ENCODE measurements at regions of chr20 and their contacts with region 1.

Region 1: DNA sequence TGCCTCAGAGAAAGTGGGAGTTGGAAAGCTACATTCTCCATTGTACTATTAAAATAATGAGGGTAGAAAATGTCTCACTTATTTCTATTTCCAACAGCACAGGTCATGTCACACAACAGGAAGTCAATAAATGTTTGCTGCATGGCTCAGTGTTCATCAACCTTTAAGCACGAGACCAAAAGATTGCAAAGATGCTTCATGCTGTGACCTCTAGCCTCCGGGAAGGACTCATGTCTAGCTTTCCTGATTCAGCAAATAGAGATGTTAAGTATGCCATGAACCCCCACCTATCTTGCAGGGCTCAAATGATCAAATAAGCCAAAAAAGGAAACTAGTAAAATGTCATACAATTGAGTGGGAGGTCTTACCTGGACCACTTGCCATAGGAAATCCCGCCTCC is 57.4 kb downstream of the NCOA6 start:
- DNase-seq: no peak
- H3K4me3 ChIP-seq: no peak overlapping the region
- H3K4me3 Mint-ChIP-seq: no peak overlapping the region
- H3K27ac Mint-ChIP-seq: no peak overlapping the region
- H3K4me1 ChIP-seq: 0 out of 2 replicates have a peak, but pooled peaks cover 4% of the 10 kb centered on the region
- H3K4me1 Mint-ChIP-seq: peaks cover 7% of the 10 kb centered on the region
- H3K27me3 ChIP-seq: no peaks in the 10 kb centered on the region
- H3K27me3 Mint-ChIP-seq: no peaks in the 10 kb centered on the region
- CTCF ChIP-seq: no peak

Region 2: DNA sequence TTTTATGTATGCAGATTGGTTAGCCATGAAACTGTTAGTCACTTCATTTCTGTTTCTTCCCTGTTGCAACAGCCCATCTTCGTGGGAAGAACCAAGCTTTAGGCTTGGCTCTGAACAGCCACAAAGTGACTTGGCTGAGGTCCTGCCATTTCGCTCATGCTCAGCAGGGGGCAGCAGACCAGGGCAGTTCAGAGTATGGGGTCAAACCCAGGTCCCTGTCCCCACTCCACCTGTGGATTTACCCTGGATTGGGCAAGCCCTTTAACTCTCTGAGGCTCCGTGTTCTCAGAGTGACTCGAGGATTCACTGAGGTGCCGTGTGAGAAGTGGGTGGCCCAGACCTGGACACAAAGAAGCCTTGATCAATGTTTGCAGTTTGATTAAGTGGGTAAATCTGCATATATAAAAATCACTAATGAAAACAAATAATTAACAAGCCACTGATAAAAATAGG is 229.4 kb before region 1 on chr20:
- CTCF ChIA-PET with region 1: interaction called, 17 read pairs
- POLR2A ChIA-PET with region 1: no interaction called
- intact Hi-C with region 1: loop called (anchors 1 kb)
- DNase-seq: peak; percentile 83 to 90
- H3K4me3 ChIP-seq: no peak overlapping the region
- H3K4me3 Mint-ChIP-seq: no peak overlapping the region
- H3K27ac Mint-ChIP-seq: peak overlapping the region; percentile 16
- H3K4me1 ChIP-seq: no peaks in the 10 kb centered on the region
- H3K4me1 Mint-ChIP-seq: no peaks in the 10 kb centered on the region
- H3K27me3 ChIP-seq: no peaks in the 10 kb centered on the region
- H3K27me3 Mint-ChIP-seq: no peaks in the 10 kb centered on the region
- CTCF ChIP-seq: peak; percentile 98 to 99

Region 3: GRCh38 chr20:34579191-34579978 is 188.7 kb before region 1 on chr20:
- CTCF ChIA-PET with region 1: interaction called, 10 read pairs
- POLR2A ChIA-PET with region 1: no interaction called
- intact Hi-C with region 1: loop called (anchors 1 kb)
- DNase-seq: peak in 1 of 2 experiments; percentile 59
- H3K4me3 ChIP-seq: no peak overlapping the region
- H3K4me3 Mint-ChIP-seq: no peak overlapping the region
- H3K27ac Mint-ChIP-seq: no peak overlapping the region
- H3K4me1 ChIP-seq: peaks cover 20% of the 10 kb centered on the region
- H3K4me1 Mint-ChIP-seq: peaks cover 9% of the 10 kb centered on the region
- H3K27me3 ChIP-seq: no peaks in the 10 kb centered on the region
- H3K27me3 Mint-ChIP-seq: no peaks in the 10 kb centered on the region
- CTCF ChIP-seq: peak in 1 of 2 experiments; percentile 82

Region 4: GRCh38 chr20:34791289-34792020 is 23.4 kb after region 1 on chr20:
- CTCF ChIA-PET with region 1: interaction called, 11 read pairs
- POLR2A ChIA-PET with region 1: no interaction called
- intact Hi-C with region 1: no loop called
- DNase-seq: no peak
- H3K4me3 ChIP-seq: no peak overlapping the region
- H3K4me3 Mint-ChIP-seq: no peak overlapping the region
- H3K27ac Mint-ChIP-seq: no peak overlapping the region
- H3K4me1 ChIP-seq: no peaks in the 10 kb centered on the region
- H3K4me1 Mint-ChIP-seq: peaks cover under 1% of the 10 kb centered on the region
- H3K27me3 ChIP-seq: no peaks in the 10 kb centered on the region
- H3K27me3 Mint-ChIP-seq: no peaks in the 10 kb centered on the region
- CTCF ChIP-seq: no peak

Region 5: DNA sequence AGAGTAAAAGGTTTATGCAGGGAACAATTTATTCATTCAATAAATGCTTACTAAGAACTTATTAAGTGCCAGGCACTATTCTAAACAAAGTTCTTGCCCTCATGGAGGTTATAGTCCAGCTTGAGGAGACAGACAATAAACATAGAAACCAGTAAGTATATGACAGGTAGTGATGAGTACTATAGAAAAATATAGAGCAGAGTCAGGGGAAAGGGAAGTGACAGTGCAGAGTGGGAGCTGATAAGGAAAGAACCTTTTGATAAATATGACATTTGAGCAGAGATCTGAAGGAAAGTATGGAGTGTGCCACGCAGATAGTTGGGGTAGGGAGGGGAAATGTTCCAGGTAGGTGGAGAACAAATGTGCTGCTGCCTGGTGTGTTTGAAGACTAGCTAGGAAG is 120.4 kb after region 1 on chr20:
- CTCF ChIA-PET with region 1: no interaction called
- POLR2A ChIA-PET with region 1: no interaction called
- intact Hi-C with region 1: no loop called
- DNase-seq: no peak
- H3K4me3 ChIP-seq: no peak overlapping the region
- H3K4me3 Mint-ChIP-seq: no peak overlapping the region
- H3K27ac Mint-ChIP-seq: no peak overlapping the region
- H3K4me1 ChIP-seq: peaks cover 15% of the 10 kb centered on the region; the same call in 1 of the 2 replicates
- H3K4me1 Mint-ChIP-seq: peaks cover 18% of the 10 kb centered on the region
- H3K27me3 ChIP-seq: no peaks in the 10 kb centered on the region
- H3K27me3 Mint-ChIP-seq: no peaks in the 10 kb centered on the region
- CTCF ChIP-seq: no peak

Region 6: GRCh38 chr20:34955232-34956040 is 187.3 kb after region 1 on chr20 and contains the starts of genes GSS and MYH7B:
- CTCF ChIA-PET with region 1: interaction called, 11 read pairs
- POLR2A ChIA-PET with region 1: no interaction called
- intact Hi-C with region 1: no loop called
- DNase-seq: peak; percentile 100
- H3K4me3 ChIP-seq: peak within 1 kb of the TSS; percentile 57
- H3K4me3 Mint-ChIP-seq: peak within 1 kb of the TSS; percentile 90
- H3K27ac Mint-ChIP-seq: peak within 1 kb of the TSS; percentile 96
- H3K4me1 ChIP-seq: peaks cover 5% of the 10 kb centered on the region
- H3K4me1 Mint-ChIP-seq: peaks cover 25% of the 10 kb centered on the region
- H3K27me3 ChIP-seq: no peaks in the 10 kb centered on the region
- H3K27me3 Mint-ChIP-seq: no peaks in the 10 kb centered on the region
- CTCF ChIP-seq: peak; percentile 64 to 83
- total RNA-seq, gene GSS: 138 TPM in 2 replicates
- total RNA-seq, gene MYH7B: 1.9 and 2.5 TPM in 2 replicates